Activated CD8-positive, alpha-beta T cell treated with anti-CD3 and anti-CD28 coated beads for 36 hours (primary cell): ENCODE measurements at regions of chr3 and their contacts with region 1.

Region 1: DNA sequence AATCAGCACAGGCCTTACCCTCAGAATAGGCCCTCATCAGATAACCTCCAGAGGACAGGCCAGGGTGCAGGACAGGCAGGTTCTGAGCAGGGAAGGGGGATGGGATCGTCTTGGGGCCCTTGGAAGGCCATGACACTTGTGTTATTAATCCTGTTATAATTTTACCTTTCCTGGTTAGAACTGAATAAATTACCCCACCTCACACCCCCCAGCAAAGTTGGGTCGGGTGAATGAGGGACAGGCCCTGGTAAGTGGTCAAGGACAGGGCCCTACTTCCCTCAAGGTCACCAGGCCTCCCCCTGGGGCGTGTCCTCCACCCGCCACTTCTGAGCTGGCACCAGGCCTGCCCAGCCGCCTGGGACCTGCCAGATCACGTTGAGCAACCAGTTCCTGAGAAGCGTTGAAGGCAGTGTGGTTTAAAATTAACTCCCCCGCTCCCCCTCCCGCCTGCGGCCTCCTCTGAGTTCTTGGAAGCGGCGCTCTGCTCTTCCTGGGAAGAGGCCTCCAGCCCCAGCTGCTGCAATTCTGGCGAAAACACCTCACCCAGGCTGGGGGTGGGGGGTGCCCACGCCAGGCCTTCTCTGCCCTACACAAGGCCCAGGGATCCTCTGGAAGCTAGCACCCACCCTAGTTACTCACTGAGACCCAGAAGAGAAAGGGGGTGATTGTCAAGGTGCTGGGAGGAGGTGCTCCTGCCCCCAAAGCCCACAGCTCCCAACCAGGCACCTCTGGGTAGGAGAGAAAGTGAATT is 10.6 kb downstream of the CISH start:
- DNase-seq: peak; percentile 98
- ATAC-seq: peak; percentile 59
- H3K4me3 Mint-ChIP-seq: peak overlapping the region; percentile 94
- H3K27ac Mint-ChIP-seq: peak overlapping the region; percentile 100
- H3K4me1 Mint-ChIP-seq: peaks cover 78% of the 10 kb centered on the region
- H3K27me3 Mint-ChIP-seq: no peaks in the 10 kb centered on the region
- CTCF ChIP-seq: no peak

Region 2: DNA sequence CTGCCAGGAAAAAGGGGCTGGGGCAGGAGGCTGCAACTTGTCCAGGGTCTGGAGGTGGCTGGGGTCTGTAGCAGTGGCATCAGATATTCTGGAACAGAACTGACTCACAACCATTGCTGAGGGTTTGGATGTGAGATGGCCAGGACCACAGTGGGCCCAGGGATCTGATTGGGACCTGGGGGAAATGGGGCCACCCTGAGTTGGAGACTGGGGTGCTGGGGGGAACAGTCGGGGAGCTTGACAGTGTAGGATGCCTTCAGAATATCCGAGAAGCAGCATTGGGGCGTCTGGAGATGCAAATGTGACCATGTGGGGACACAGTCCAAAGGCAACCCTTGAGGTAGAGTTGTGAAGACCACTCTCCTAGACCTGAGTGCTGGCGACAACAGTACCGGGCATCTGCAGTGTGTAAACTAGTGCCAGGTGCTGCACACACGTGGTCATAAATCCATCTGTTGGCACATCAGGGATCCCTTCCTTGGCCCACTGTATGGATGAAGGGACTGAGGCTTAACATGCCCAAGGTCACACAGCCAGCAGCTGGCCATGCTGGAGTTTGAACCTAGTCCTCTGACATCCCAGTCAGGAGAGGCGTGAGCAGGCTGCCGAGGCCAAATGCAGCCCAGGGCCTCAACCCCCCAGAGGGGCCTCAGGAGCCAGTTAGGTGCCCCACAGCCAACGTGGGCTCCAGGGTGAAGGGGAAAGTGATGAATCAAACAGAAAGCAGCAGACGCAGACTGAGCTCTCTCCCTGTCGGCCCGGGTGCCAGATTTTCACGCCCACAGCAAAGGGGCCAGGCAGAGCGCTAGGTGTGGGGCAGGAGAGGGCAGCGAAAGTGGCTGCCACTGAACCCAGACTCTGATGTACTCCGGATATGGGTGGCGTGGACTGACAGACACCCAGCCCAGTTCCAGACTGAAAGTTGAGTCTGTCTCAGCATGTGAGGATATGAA is 12.9 kb before region 1 on chr3:
- CTCF ChIA-PET with region 1: interaction called, 217 read pairs
- POLR2A ChIA-PET with region 1: interaction called, 2,276 read pairs
- intact Hi-C with region 1: loop called (anchors 1 kb)
- DNase-seq: peak; percentile 96
- ATAC-seq: peak; percentile 48
- H3K4me3 Mint-ChIP-seq: peak overlapping the region; percentile 59
- H3K27ac Mint-ChIP-seq: peak overlapping the region; percentile 100
- H3K4me1 Mint-ChIP-seq: peaks cover 89% of the 10 kb centered on the region
- H3K27me3 Mint-ChIP-seq: no peaks in the 10 kb centered on the region
- CTCF ChIP-seq: no peak

Region 3: GRCh38 chr3:50630877-50631276 is 29.9 kb after region 1 on chr3:
- CTCF ChIA-PET with region 1: no interaction called
- POLR2A ChIA-PET with region 1: no interaction called
- intact Hi-C with region 1: no loop called
- DNase-seq: no peak
- ATAC-seq: no peak
- H3K4me3 Mint-ChIP-seq: no peak overlapping the region
- H3K27ac Mint-ChIP-seq: no peak overlapping the region
- H3K4me1 Mint-ChIP-seq: peaks cover 87% of the 10 kb centered on the region
- H3K27me3 Mint-ChIP-seq: no peaks in the 10 kb centered on the region
- CTCF ChIP-seq: no peak